AG04450 (cell line): ENCODE measurements at regions of chr22 and their contacts with region 1.

Region 1: DNA sequence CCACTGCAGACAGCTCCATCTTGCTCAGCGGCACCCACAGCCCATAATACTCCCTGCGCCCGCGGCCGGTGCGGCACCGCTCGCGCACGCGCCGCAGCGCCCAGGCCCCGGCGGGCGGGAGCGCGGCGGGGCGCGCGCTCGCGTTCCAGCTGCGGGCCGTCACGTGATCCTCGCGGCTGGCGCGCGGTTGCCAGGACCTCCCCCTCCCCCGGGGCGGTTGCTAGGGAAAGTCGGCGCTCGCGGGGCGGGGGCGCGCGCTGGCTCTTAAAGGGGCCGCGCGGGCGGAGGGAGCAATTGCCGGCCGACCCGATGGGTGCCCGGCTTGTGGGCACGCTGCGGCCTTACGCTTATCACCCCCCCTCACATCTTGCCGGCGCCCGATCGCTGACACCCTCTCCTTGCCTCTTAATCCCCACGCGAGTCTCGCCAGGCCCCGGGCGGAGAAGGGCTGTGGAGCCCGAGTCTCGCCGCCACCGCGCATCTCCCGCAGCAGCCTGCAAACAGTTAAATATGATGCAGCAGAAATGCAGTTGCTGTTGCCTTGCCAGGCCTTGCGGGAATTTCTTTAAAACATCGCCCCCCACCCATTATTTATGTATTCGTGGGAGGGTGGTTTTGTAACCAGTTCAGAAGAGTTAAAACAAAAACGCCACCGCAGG is at the start of gene CBX6:
- DNase-seq: peak; percentile 63
- H3K4me3 ChIP-seq: peak within 1 kb of the TSS; percentile 78
- H3K27ac ChIP-seq: peak within 1 kb of the TSS; percentile 88
- H3K27me3 ChIP-seq: peaks cover 3% of the 10 kb centered on the region
- CTCF ChIP-seq: no peak
- polyA plus RNA-seq, gene CBX6: 14.7 and 19.8 TPM in 2 replicates

Region 2: GRCh38 chr22:38740754-38741153 is 131.5 kb before region 1 on chr22:
- CTCF ChIA-PET with region 1: no interaction called
- POLR2A ChIA-PET with region 1: interaction called, 10 read pairs
- DNase-seq: no peak
- H3K4me3 ChIP-seq: no peak overlapping the region
- H3K27ac ChIP-seq: no peak overlapping the region
- H3K27me3 ChIP-seq: no peaks in the 10 kb centered on the region
- CTCF ChIP-seq: no peak

Region 3: DNA sequence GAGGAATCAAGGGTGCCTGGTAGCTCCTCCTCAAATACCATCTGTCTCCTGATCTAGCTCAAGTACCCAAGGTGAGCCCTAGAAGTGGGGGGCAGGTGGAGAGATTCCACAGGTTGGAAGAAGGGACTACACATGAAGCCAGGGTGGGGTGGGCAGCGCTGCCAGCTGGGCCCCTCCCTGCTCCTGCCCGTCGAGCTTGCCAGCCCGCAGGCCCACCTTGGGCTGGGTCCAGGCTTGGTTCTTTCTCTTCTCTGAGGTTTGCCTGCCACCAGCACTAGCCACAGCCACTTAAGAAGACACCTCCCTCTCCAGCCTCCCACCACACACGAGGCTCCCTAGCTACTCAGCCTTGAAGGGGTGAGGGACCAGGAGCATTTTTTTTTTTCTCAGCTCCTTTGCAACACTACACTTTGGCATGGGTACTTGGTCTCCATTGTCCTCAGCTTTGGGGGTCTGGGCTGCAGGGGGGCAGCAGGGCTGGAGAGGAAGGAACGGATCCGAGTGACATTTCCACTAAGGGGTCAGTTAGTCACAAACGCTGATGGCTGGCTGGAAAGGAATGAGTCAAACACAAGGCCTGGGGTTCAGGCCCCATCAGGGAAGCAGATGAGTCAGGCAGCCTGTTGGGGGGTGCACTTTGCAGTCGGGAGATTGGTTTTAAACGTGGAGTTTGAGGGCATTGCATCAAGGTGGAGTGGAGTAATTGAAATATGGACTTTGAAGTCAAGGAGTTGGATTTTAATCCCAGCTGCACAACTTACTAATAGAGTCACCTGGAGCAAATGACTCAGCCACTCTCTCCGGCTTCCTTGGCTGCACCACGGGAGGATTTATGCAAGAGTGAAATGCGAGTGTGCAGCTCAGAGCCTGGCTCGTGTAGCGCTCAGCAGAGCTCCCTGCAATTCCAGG is 21.1 kb before region 1 on chr22:
- CTCF ChIA-PET with region 1: interaction called, 13 read pairs
- POLR2A ChIA-PET with region 1: no interaction called
- DNase-seq: peak; percentile 20
- H3K4me3 ChIP-seq: no peak overlapping the region
- H3K27ac ChIP-seq: peak overlapping the region; percentile 11
- H3K27me3 ChIP-seq: peaks cover 15% of the 10 kb centered on the region
- CTCF ChIP-seq: no peak

Region 4: DNA sequence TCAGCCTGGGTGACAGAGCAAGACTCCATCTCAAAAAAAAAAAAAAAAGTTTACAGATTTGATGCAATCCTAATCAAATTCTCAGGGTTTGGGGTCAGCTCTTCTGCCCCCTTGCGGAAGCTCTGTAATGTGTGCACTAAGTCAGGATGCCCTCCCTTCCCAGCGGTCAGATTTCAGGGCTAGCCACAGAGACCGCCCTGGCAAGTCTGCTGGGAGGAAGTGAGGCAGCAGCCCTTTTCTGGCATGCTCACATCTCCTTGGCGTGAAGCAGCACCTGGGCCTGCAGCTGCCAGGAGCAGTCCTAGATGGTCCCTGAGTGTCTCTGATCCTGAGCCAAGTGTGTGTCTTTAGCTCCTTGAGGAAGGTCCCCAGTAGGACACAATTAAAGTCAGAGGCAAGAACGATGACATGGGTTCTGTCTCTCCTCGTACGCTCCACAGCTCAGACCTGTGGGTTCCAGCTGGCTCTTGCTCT is 130.9 kb after region 1 on chr22:
- CTCF ChIA-PET with region 1: interaction called, 109 read pairs
- POLR2A ChIA-PET with region 1: interaction called, 5 read pairs
- DNase-seq: peak; percentile 67
- H3K4me3 ChIP-seq: no peak overlapping the region
- H3K27ac ChIP-seq: peak overlapping the region; percentile 21
- H3K27me3 ChIP-seq: peaks cover 4% of the 10 kb centered on the region
- CTCF ChIP-seq: peak; percentile 83

Region 5: DNA sequence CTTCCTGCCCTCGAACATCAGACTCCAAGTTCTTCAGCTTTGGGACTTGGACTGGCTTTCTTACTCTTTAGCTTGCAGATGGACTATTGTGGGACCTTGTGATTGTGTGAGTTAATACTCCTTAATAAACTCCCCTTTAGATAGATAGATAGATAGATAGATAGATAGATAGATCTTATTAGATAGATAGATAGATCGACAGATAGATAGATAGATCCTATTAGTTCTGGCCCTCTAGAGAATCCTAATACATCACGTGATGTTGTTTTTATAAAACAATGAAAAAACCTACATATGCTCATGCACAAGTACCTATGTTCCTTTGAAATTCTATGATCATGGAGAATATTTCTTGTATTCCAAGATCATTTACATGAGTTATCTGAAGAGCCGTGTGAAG is 248.7 kb after region 1 on chr22:
- CTCF ChIA-PET with region 1: interaction called, 12 read pairs
- POLR2A ChIA-PET with region 1: no interaction called
- DNase-seq: no peak
- H3K4me3 ChIP-seq: no peak overlapping the region
- H3K27ac ChIP-seq: no peak overlapping the region
- H3K27me3 ChIP-seq: peaks cover 20% of the 10 kb centered on the region
- CTCF ChIP-seq: no peak